Esophagus muscularis mucosa (tissue), 4 donors: ENCODE measurements at regions of chr1 and their contacts with region 1.

Region 1: GRCh38 chr1:54547601-54548388 is at the start of gene ACOT11:
- DNase-seq: no peak
- H3K4me3 ChIP-seq: peak within 1 kb of the TSS; percentile 46 to 59 (median 53)
- H3K27ac ChIP-seq: peak within 1 kb of the TSS; percentile 84 to 90 (median 88)
- H3K4me1 ChIP-seq: peaks cover 23 to 67% (median 60%) of the 10 kb centered on the region in 4 donors
- H3K27me3 ChIP-seq: no peaks in the 10 kb centered on the region
- CTCF ChIP-seq: peak; percentile 60 to 74 (median 73)
- EP300 ChIP-seq: no peak
- POLR2A ChIP-seq: peak; percentile 20
- total RNA-seq, gene ACOT11: 6.9 to 19.1 (median 13.4) TPM

Region 2: GRCh38 chr1:54581621-54582035 is 33.8 kb after region 1 on chr1:
- intact Hi-C with region 1: loop called (anchors 5 kb)
- DNase-seq: peak; percentile 95
- H3K4me3 ChIP-seq: no peak overlapping the region
- H3K27ac ChIP-seq: peak overlapping the region; percentile 87 to 93 (median 90)
- H3K4me1 ChIP-seq: peaks cover 61 to 73% (median 63%) of the 10 kb centered on the region in 4 donors
- H3K27me3 ChIP-seq: no peaks in the 10 kb centered on the region
- CTCF ChIP-seq: peak; percentile 16 to 44 (median 34)
- EP300 ChIP-seq: peak; percentile 60
- POLR2A ChIP-seq: no peak